ENCODE measurements at regions of chr11 and their contacts with region 1.

Region 1: DNA sequence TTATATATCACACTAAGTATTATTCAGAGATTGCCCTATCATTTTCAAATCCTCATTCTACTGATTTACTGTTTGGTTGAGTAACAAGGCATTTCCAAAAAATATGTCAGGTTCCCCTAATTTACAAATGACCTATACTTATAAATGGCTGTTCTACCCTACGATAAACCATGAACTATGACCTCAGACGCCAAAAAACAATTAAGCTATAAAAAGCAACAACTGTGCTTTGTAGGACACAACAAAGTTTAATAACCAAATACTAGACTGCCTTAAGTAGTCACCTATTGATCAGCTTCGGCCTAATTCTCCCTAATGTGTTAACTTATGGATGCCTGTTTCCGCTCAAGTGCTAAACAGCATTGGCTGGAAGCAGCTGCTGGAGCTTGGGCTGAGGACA is 53.2 kb downstream of the PICALM start:
- DNase-seq: no peak
- H3K4me3 Mint-ChIP-seq: no peak overlapping the region
- H3K27ac Mint-ChIP-seq: no peak overlapping the region
- H3K4me1 Mint-ChIP-seq: peaks cover 21% of the 10 kb centered on the region
- H3K27me3 Mint-ChIP-seq: no peaks in the 10 kb centered on the region

Region 2: GRCh38 chr11:85977751-85978160 is 37.9 kb before region 1 on chr11:
- CTCF ChIA-PET with region 1: no interaction called
- POLR2A ChIA-PET with region 1: interaction called, 3 read pairs
- intact Hi-C with region 1: loop called (anchors 5 kb)
- DNase-seq: no peak
- H3K4me3 Mint-ChIP-seq: no peak overlapping the region
- H3K27ac Mint-ChIP-seq: no peak overlapping the region
- H3K4me1 Mint-ChIP-seq: peaks cover 11% of the 10 kb centered on the region
- H3K27me3 Mint-ChIP-seq: no peaks in the 10 kb centered on the region

Region 3: GRCh38 chr11:86067009-86067850 is 51.5 kb after region 1 on chr11:
- CTCF ChIA-PET with region 1: no interaction called
- POLR2A ChIA-PET with region 1: no interaction called
- intact Hi-C with region 1: no loop called
- DNase-seq: no peak
- H3K4me3 Mint-ChIP-seq: peak overlapping the region; percentile 96
- H3K27ac Mint-ChIP-seq: peak overlapping the region; percentile 88
- H3K4me1 Mint-ChIP-seq: peaks cover 38% of the 10 kb centered on the region
- H3K27me3 Mint-ChIP-seq: no peaks in the 10 kb centered on the region

Measured in activated CD4-positive, alpha-beta memory T cell treated with anti-CD3 and anti-CD28 coated beads for 36 hours (primary cell).